ENCODE measurements at regions of chr16 and their contacts with region 1.

Region 1: DNA sequence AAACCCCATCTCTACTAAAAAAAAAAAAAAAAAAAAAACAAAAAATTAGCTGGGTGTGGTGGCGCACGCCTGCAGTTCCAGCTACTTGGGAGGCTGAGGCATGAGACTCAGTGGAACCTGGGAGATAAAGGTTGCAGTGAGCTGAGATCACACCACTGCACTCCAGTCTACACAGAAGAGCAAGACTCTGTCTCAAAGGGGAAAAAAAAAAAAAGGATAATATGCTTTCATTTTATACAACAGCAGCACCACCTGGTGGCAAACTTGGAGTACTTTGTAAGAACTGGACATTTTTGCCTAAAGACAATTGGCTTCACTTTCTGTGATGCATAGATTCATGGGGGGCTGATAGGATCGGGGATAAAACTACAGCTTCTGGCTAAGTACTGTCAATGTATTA is 8.5 kb downstream of the CHTF8 start:
- DNase-seq: no peak
- ATAC-seq: peak; percentile 44 to 74 (median 54)
- H3K4me3 ChIP-seq: no peak overlapping the region
- H3K27ac ChIP-seq: no peak overlapping the region
- H3K4me1 ChIP-seq: peaks cover under 1% of the 10 kb centered on the region
- H3K27me3 ChIP-seq: no peaks in the 10 kb centered on the region
- CTCF ChIP-seq: peak; percentile 69

Region 2: GRCh38 chr16:68843482-68844210 is 280.3 kb before region 1 on chr16 and contains the start of gene TANGO6:
- intact Hi-C with region 1: loop called in 1 of 2 experiments (anchors 5 kb)
- DNase-seq: peak; percentile 90 to 94
- ATAC-seq: peak; percentile 98 to 100 (median 99)
- H3K4me3 ChIP-seq: peak within 1 kb of the TSS; percentile 99
- H3K27ac ChIP-seq: peak within 1 kb of the TSS; percentile 95
- H3K4me1 ChIP-seq: peaks cover 7% of the 10 kb centered on the region
- H3K27me3 ChIP-seq: no peaks in the 10 kb centered on the region
- CTCF ChIP-seq: peak; percentile 13
- total RNA-seq, gene TANGO6: 12.1 to 16.2 (median 13.3) TPM

Region 3: DNA sequence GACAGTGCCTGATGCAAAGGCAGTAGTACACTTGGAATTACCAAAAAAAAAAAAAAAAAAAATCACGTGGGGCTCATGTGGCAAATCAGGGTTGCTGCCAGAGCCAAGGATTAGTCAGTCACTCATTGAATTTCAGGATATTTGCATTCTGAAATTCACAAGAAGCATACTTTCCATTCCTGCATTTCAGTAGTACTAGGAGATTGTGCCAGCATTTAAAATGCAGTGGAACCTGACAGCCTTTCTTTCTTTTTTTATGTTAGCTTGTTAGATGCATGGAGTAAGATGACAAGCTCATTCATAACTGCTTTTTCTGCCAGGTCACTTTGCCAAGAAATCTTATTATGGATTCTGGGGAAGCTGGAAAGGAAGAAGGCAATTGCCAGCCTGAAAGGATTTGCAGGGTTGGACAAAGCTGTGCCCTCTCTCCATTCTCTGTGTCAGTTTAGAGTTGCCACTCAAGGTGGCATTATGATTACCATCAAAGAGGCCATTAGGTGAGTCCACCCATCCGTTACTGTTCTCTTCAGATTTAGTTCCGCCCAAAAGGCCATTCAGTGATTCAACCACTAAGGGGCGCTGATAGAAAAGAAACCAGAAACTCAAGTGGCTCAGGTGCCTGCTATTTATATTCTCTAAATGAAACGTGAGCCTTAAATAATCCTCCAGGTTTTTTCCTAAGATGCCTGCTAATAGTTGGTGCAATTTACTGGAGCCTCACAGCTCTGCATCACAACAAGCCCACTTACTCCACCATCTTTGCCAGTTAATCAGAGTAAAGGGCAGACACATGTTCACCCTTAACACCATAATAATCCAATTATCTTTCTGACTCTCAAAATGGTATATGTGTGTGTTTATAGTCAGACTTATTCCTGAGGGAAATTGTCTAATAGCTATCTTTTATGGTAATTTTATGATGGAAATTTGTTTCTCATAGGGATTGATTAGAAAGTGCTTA is 221.6 kb before region 1 on chr16:
- intact Hi-C with region 1: loop called (anchors 1 to 2 kb)
- DNase-seq: no peak
- ATAC-seq: peak; percentile 79 to 94 (median 82)
- H3K4me3 ChIP-seq: no peak overlapping the region
- H3K27ac ChIP-seq: no peak overlapping the region
- H3K4me1 ChIP-seq: peaks cover 15% of the 10 kb centered on the region
- H3K27me3 ChIP-seq: no peaks in the 10 kb centered on the region
- CTCF ChIP-seq: peak; percentile 71